GM13976 (cell line): ENCODE measurements at regions of chr7 and their contacts with region 1.

Region 1: GRCh38 chr7:77331938-77332695 is 84.0 kb downstream of the GSAP start:
- DNase-seq: peak; percentile 76
- CTCF ChIP-seq: peak; percentile 68

Region 2: GRCh38 chr7:77247206-77247850 is 84.8 kb before region 1 on chr7:
- in situ Hi-C with region 1: loop called (anchors 5 kb)
- DNase-seq: peak; percentile 69
- CTCF ChIP-seq: peak; percentile 63

Region 3: DNA sequence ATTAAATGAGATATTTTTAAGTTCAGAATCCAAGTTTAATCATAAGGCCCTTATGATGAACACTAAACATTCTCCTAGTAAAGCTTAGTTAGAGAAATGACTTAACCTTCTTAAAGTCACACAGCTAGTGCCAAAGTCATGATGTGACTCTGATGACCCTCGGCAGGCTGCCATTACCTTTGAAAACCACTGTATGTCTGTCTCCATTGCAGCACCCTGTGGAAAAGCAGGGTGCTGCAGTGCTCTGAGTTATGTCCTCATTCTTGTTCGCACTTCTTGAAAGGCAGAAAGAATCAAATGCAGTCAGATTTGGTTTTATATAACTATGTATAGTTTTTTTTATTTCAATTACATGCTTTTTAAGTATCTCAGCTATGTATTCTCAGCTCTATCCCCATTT is 571.5 kb after region 1 on chr7:
- in situ Hi-C with region 1: no loop called
- DNase-seq: peak; percentile 15
- CTCF ChIP-seq: peak; percentile 37